ENCODE measurements at regions of chr15 and their contacts with region 1.

Region 1: DNA sequence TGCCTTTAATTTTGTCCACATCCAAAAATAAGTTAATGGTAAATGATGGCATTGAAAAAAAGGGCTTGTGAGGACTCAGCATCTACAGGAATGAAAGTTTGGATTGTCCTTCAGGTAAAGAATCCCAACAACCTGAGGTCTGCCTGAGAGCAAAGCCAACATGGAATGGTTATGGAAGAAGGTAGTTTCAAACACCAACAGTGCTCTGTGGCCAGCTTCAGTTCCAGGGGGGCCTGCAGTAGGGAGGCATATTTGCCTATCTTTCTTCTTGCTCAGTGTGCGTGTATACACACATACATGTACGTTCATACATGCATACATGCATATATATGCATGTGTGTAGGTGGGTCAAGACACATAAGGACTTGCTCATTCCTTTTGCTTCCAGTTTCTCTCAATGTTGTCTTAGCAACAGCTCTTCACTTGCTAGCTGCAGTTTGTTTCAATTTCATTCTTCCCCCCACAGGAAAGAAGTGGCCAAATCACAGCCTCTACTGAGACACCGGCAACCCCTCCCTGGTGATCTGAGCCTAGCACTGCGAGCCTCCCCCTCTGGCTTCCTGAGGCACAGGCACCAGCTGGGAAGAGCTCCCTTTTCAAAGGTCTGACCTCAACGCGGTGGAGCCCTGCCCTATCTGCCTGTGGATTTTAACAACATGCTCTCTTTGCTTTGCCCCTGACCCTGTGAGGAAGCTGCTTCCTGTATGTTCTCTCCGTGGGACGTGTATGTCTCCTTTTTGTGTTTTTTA is 146.2 kb downstream of the KLF13 start:
- DNase-seq: no peak
- ATAC-seq: no peak
- H3K4me3 ChIP-seq: no peak overlapping the region
- H3K27ac ChIP-seq: no peak overlapping the region
- H3K4me1 ChIP-seq: peaks cover 9% of the 10 kb centered on the region; the same call in 2 of the 3 replicates
- CTCF ChIP-seq: no peak
- EP300 ChIP-seq: no peak
- POLR2A ChIP-seq: no peak
- RAD21 ChIP-seq: no peak

Region 2: DNA sequence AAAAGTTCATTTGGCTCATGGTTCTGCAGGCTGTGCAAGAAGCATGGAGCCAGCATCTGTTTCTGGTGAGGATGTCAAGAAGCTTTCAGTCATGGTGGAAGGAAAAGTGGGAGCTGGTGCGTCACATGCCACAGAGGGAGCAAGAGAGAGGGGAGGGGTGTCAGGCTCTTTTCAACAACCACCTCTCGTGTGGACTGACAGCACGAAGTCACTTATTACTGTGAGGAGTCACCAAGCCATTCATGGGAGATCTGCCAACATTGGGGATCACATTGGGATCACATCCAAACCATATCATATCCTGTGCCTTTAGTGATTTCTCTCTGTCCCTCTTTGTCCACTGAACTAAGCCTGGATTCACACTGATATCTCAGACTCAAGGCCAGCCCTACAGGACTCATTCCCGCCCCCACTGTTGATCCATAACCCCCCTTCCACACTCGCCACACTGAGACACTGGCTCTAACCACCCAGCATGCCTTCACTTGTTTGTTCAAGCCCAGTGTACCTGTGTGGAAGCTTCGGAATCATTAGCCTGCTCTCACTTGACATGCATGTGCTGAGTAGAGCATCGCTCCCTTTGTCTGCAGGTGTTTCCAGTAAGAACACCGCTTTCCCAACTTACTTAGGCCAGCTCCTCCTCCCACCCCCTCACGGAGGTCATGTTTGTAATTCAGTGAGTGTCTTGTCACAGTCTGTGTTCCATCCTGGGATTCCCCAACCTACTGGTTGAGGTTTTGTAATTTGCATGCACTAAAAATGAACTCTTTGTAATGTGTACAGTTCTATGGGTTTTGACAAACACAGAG is 14.0 kb before region 1 on chr15:
- CTCF ChIA-PET with region 1: interaction called, 11 read pairs
- POLR2A ChIA-PET with region 1: no interaction called
- DNase-seq: no peak
- ATAC-seq: no peak
- H3K4me3 ChIP-seq: no peak overlapping the region
- H3K27ac ChIP-seq: peak overlapping the region; percentile 68 to 73; a peak in 4 of 6 replicates
- H3K4me1 ChIP-seq: peaks cover 35% of the 10 kb centered on the region
- CTCF ChIP-seq: no peak
- EP300 ChIP-seq: no peak
- POLR2A ChIP-seq: no peak
- RAD21 ChIP-seq: no peak

Measured in A549 (cell line).